ENCODE measurements at regions of chr5 and their contacts with region 1.

Region 1: DNA sequence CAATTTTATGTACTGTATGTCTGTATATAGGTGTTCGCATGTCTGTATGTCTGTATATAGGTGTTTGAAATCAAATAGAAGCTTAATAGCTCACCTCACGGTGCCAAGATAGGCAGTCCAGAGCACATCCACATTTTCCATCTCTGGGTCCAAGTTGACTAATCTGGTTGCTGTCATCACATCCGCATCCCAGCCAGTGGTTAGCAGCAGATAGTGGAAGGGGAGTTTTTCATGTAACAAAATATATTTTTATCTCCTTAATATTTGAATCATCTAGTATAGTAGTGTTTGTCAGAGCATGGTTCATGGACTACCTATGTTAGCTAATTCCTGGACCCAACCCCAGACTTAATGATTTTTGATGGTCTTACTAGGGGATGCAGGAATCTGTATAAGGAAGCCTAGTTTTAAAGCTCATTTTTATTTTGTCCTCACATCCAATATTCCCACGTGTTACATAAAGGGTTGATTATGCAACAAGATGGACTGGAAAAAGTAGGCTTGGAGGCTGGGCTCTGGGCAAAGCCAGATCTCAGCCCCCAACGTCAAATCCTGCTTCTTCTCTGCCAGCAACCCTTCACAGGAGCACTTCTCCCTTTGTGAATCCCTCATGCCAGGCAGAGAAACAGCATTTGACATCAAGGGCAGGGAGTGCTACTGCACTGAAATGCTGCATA is 219.7 kb downstream of the ZSWIM6 start:
- DNase-seq: no peak
- H3K4me3 ChIP-seq: no peak overlapping the region
- H3K27ac ChIP-seq: no peak overlapping the region
- H3K4me1 ChIP-seq: no peaks in the 10 kb centered on the region
- H3K27me3 ChIP-seq: no peaks in the 10 kb centered on the region
- CTCF ChIP-seq: no peak
- POLR2A ChIP-seq: no peak

Region 2: DNA sequence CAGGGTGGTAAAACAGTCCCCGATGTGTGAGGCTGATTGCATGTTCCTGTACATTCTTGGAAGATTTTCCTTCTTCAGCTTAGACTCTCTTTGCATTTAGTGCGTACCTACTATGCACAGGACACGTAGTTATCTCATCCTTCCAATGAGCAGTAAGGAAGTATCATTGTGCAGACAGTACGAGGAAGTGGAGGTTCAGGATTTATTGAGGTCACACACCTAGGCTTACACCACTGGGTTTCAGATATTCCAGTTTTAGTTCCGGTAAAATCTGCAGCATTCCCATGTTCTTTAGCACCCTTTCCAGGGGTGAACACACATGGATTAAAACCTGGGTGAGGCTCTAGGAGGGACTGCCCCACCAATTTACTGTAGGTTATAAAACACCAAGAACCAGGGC is 19.0 kb after region 1 on chr5:
- intact Hi-C with region 1: loop called (anchors 1 kb)
- DNase-seq: no peak
- H3K4me3 ChIP-seq: no peak overlapping the region
- H3K27ac ChIP-seq: no peak overlapping the region
- H3K4me1 ChIP-seq: no peaks in the 10 kb centered on the region
- H3K27me3 ChIP-seq: no peaks in the 10 kb centered on the region
- CTCF ChIP-seq: no peak
- POLR2A ChIP-seq: no peak

Region 3: GRCh38 chr5:62082370-62082801 is 530.6 kb after region 1 on chr5:
- intact Hi-C with region 1: loop called (anchors 5 kb)
- DNase-seq: no peak
- H3K4me3 ChIP-seq: no peak overlapping the region
- H3K27ac ChIP-seq: no peak overlapping the region
- H3K4me1 ChIP-seq: no peaks in the 10 kb centered on the region
- H3K27me3 ChIP-seq: no peaks in the 10 kb centered on the region
- CTCF ChIP-seq: no peak
- POLR2A ChIP-seq: no peak

Measured in breast epithelium (tissue), 4 donors.